ENCODE measurements at regions of chr12 and their contacts with region 1.

Region 1: GRCh38 chr12:41663598-41664258 is 475.6 kb downstream of the PDZRN4 start:
- DNase-seq: no peak
- ATAC-seq: peak; percentile 91
- H3K4me3 Mint-ChIP-seq: no peak overlapping the region
- H3K27ac Mint-ChIP-seq: no peak overlapping the region
- H3K4me1 Mint-ChIP-seq: peaks cover 15% of the 10 kb centered on the region
- H3K27me3 Mint-ChIP-seq: no peaks in the 10 kb centered on the region
- CTCF ChIP-seq: peak; percentile 49; the same call in 1 of the 2 replicates

Region 2: DNA sequence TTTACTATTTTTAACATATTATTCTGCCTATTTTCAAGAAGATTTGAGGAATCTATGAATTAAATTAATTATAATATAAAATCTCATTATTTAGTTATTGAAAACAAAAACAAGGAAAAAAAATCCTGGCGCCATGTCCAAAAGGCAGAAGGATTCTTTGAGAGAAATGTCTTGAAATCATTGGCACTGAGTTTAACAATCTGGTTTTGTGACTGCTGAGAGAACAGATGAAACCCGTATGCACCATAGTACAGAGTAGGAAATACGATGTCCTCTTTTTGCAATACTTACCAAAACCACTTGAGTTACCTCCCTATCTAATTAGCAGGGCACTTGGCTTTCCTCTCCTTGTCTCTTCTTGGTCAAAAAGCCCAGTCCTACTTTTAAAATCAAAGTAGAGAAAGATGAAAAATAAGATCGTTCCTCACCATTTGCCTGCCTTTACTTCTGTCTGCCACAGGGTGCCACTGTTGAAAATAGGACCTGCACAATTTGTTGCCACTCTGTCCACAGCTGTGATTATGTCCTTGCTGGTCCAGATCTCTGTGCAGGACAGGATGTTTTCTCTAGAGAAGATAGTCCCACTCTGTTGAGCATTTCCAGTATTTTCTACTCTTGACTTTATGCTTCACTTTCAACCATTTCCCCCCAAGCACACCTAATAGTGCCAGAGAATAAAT is 295.9 kb before region 1 on chr12:
- CTCF ChIA-PET with region 1: interaction called, 10 read pairs
- POLR2A ChIA-PET with region 1: no interaction called
- DNase-seq: no peak
- ATAC-seq: no peak; the same call in 1 of the 2 replicates
- H3K4me3 Mint-ChIP-seq: no peak overlapping the region
- H3K27ac Mint-ChIP-seq: no peak overlapping the region
- H3K4me1 Mint-ChIP-seq: peaks cover 21% of the 10 kb centered on the region
- H3K27me3 Mint-ChIP-seq: peaks cover 3% of the 10 kb centered on the region
- CTCF ChIP-seq: no peak

Region 3: GRCh38 chr12:41992022-41992421 is 328.3 kb after region 1 on chr12:
- CTCF ChIA-PET with region 1: no interaction called
- POLR2A ChIA-PET with region 1: no interaction called
- DNase-seq: no peak
- ATAC-seq: no peak
- H3K4me3 Mint-ChIP-seq: no peak overlapping the region
- H3K27ac Mint-ChIP-seq: no peak overlapping the region
- H3K4me1 Mint-ChIP-seq: no peaks in the 10 kb centered on the region
- H3K27me3 Mint-ChIP-seq: no peaks in the 10 kb centered on the region
- CTCF ChIP-seq: no peak

Measured in WTC11 (cell line).